Activated B cell treated with CpG ODN at 0.5 μM for 24 hours (primary cell): ENCODE measurements at regions of chrX and their contacts with region 1.

Region 1: DNA sequence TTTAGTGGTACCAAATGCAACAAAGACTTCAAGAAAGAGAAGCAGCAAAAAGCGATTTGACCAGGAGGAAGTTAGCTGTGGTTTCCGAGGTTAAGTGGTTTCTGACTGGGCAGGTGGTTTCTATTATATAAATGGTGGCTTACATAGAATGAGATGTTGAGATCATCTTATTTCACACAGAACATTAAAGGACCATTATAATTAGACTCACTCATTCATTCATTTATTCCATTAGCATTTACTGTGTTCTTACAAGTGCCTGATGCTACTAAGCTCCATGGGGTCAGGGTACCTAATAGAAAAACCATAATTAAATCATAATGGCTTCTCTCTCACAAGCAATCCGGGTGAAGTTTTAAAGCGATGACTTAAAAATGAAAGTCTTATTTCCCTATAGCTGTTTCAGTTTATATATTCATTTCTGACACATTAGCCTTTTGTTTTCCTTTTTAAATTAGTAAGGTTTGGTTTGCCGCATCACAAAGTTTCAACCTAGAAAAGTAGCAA is 10.6 kb downstream of the TSPAN6 start:
- DNase-seq: no peak
- ATAC-seq: peak; percentile 73
- H3K4me3 Mint-ChIP-seq: peak overlapping the region; percentile 46
- H3K27ac Mint-ChIP-seq: peak overlapping the region; percentile 46
- H3K4me1 Mint-ChIP-seq: peaks cover 13% of the 10 kb centered on the region
- H3K27me3 Mint-ChIP-seq: no peaks in the 10 kb centered on the region
- CTCF ChIP-seq: no peak

Region 2: DNA sequence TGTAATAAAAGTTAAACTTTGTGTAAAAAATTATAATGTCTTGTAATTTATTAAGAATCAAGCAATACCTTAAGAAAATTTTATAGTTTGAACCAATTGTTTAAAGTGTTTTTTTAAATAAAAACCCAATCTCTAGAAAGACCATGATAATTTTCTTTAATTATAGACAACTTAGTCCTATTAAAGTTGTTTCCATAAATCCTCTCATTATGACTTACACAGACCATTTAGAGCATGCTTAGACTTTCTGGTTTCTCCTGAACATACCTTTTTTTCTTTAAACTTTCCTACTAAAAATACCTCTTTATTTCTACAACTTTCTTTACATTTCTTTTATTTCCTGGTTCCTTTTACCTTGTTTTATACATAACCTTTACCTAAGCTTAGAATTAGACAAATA is 1053.3 kb before region 1 on chrX:
- CTCF ChIA-PET with region 1: no interaction called
- POLR2A ChIA-PET with region 1: no interaction called
- intact Hi-C with region 1: no loop called
- DNase-seq: no peak
- ATAC-seq: no peak
- H3K4me3 Mint-ChIP-seq: no peak overlapping the region
- H3K27ac Mint-ChIP-seq: no peak overlapping the region
- H3K4me1 Mint-ChIP-seq: no peaks in the 10 kb centered on the region
- H3K27me3 Mint-ChIP-seq: no peaks in the 10 kb centered on the region
- CTCF ChIP-seq: no peak

Region 3: DNA sequence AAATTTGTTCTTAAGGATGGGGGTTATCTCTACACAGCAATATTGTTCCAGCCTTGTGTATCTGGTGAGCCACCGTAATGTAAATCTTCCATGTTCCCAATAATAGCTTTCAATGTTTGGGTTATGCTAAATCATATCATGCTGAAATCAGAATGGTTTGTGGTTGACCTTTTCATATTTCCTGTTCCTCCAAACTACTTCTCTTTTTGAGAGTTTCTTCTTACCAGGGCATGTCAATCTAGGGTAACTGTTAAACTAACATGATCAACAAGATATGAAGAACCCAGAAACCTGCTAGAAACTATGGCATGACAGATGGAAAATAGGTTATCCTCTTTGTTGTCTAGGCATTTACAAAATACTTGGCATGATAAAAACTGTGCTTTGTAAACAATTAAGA is 19.3 kb before region 1 on chrX:
- CTCF ChIA-PET with region 1: interaction called, 5 read pairs
- POLR2A ChIA-PET with region 1: no interaction called
- intact Hi-C with region 1: loop called (anchors 2 kb)
- DNase-seq: no peak
- ATAC-seq: peak; percentile 31
- H3K4me3 Mint-ChIP-seq: no peak overlapping the region
- H3K27ac Mint-ChIP-seq: no peak overlapping the region
- H3K4me1 Mint-ChIP-seq: peaks cover 18% of the 10 kb centered on the region
- H3K27me3 Mint-ChIP-seq: peaks cover 5% of the 10 kb centered on the region
- CTCF ChIP-seq: no peak

Region 4: DNA sequence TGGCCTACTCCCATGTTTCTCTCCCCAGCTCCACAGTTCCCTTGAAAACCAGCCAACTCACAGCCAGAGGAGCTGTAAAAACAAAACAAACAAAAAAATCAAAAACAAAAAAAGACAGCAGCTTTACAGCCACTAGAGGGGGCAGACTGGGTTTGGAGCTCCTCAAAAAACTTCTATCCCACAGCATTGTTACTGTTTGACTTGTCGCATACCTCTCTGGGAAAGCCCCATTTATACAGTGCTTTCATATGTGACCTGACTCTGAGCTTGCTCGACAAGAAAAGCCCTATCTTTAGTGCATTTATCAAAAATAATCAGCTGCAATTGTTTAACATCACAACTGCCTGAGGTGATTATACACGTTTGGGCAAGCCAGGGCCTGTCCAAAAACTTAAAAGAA is 11.0 kb before region 1 on chrX:
- CTCF ChIA-PET with region 1: interaction called, 8 read pairs
- POLR2A ChIA-PET with region 1: no interaction called
- intact Hi-C with region 1: loop called (anchors 1 kb)
- DNase-seq: no peak
- ATAC-seq: peak; percentile 90
- H3K4me3 Mint-ChIP-seq: no peak overlapping the region
- H3K27ac Mint-ChIP-seq: no peak overlapping the region
- H3K4me1 Mint-ChIP-seq: peaks cover 5% of the 10 kb centered on the region
- H3K27me3 Mint-ChIP-seq: peaks cover 9% of the 10 kb centered on the region
- CTCF ChIP-seq: no peak